Dorsolateral prefrontal cortex (tissue), 120 donors: ENCODE measurements at regions of chr16 and their contacts with region 1.

Region 1: GRCh38 chr16:23556881-23557778 is at the starts of genes EARS2 and UBFD1:
- DNase-seq: peak; percentile 93 to 97 (median 96)
- H3K4me3 ChIP-seq: peak within 1 kb of the TSS; percentile 65 to 99 (median 90)
- H3K27ac ChIP-seq: peak within 1 kb of the TSS; percentile 70 to 97 (median 90)
- H3K27me3 ChIP-seq: no peaks in the 10 kb centered on the region
- CTCF ChIP-seq: peak; percentile 73 to 97 (median 90)
- total RNA-seq, gene EARS2: 20.1 to 47.2 (median 31.9) TPM
- total RNA-seq, gene UBFD1: 43.7 to 103 (median 69.8) TPM

Region 2: GRCh38 chr16:23452572-23453337 is 104.4 kb before region 1 on chr16 and contains the start of gene COG7:
- intact Hi-C with region 1: loop called in 1 of 2 experiments (anchors 1 kb)
- DNase-seq: peak; percentile 70 to 92 (median 84)
- H3K4me3 ChIP-seq: peak within 1 kb of the TSS; percentile 52 to 99 (median 93)
- H3K27ac ChIP-seq: peak within 1 kb of the TSS in 55 of 59 donors; percentile 12 to 91 (median 76)
- H3K27me3 ChIP-seq: peaks cover 0 to 7% (median 0%) of the 10 kb centered on the region in 45 donors
- CTCF ChIP-seq: peak in 27 of 56 donors; percentile 10 to 54 (median 25)
- total RNA-seq, gene COG7: 22.6 to 48.1 (median 35.2) TPM

Region 3: DNA sequence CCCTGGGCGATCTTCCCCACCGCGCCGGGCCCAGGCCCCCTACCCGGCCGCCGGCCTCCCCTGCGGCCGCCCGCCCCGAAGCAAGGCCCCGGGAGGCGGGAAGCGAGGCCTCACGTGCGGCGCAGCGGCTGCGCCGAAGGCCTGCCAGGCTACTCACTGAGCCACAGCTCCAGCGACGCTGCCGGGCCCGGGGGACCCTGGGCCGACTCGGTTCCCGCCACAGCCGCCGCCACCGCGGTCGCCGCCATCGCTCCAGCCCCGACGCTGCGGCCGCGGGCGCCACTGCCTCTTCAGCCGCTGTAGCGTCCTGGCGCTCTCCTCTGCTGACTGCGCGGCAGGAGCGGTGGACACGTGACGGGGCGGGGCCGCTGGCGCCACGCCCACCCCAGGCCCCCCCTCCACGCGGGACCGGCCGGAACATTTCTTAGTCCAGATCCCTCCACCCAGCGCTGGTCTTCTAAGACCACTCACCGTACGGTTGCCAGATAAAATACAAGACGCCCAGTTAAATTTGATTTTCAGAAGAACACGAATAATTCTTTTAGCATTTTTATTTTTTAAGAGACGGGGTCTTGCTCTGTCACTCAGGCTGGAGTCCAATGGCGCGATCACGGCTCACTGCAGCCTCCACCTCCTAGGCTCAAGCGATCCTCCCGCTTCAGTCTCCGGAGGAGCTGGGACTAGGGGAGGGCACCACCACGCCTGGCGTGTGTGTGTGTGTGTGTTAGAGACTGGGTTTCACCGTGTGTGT is 46.8 kb before region 1 on chr16 and contains the start of gene GGA2:
- intact Hi-C with region 1: loop called in 1 of 2 experiments (anchors 5 kb)
- DNase-seq: peak; percentile 69 to 88 (median 80)
- H3K4me3 ChIP-seq: peak within 1 kb of the TSS; percentile 61 to 95 (median 76)
- H3K27ac ChIP-seq: peak within 1 kb of the TSS in 54 of 59 donors; percentile 11 to 93 (median 76)
- H3K27me3 ChIP-seq: no peaks in the 10 kb centered on the region
- CTCF ChIP-seq: peak in 24 of 56 donors; percentile 3 to 70 (median 22)
- total RNA-seq, gene GGA2: 46.0 to 124 (median 85.7) TPM

Region 4: GRCh38 chr16:23640931-23641765 is 84.0 kb after region 1 on chr16 and contains the starts of genes DCTN5 and PALB2:
- intact Hi-C with region 1: loop called in 1 of 2 experiments (anchors 2 kb)
- DNase-seq: peak; percentile 89 to 97 (median 95)
- H3K4me3 ChIP-seq: peak within 1 kb of the TSS; percentile 65 to 100 (median 94)
- H3K27ac ChIP-seq: peak within 1 kb of the TSS in 56 of 59 donors; percentile 12 to 86 (median 68)
- H3K27me3 ChIP-seq: no peaks in the 10 kb centered on the region
- CTCF ChIP-seq: peak in 46 of 56 donors; percentile 7 to 62 (median 35)
- total RNA-seq, gene DCTN5: 69.5 to 136 (median 106) TPM
- total RNA-seq, gene PALB2: 8.2 to 23.7 (median 12.9) TPM